ENCODE measurements at regions of chr15 and their contacts with region 1.

Region 1: DNA sequence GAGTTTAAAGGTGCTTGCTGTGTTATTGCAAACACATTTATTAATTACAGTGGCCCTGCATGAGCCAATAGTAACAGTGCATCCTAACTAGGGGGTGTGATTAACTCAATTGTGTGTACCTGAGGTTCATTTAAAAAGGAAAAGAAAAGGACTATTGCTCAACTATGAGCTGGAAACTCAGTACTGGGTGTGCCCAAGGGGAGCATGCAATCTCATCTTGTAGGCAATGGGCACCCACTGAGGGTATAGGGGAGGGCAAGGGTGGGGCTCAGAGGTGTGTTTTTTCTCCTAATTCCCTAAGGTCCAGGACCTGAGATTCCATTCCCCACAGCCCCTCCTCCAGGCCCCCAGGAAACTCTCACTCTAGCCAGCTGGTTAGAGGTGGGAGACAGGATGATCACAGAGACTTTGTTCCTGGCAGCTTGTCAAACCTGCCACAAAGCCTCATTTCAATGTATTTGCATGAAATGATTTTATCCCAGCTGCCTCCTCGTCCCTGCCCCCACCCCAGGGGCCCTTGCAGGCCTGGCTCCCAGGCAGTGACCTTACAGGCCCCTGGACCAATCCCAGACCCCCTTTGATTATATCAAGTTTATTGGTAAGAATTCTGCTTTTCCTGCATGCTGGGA is 220.7 kb downstream of the TBC1D2B start:
- DNase-seq: no peak
- ATAC-seq: no peak
- H3K4me3 ChIP-seq: no peak overlapping the region
- H3K27ac ChIP-seq: no peak overlapping the region
- H3K4me1 ChIP-seq: no peaks in the 10 kb centered on the region
- CTCF ChIP-seq: no peak
- EP300 ChIP-seq: no peak
- POLR2A ChIP-seq: no peak
- RAD21 ChIP-seq: no peak

Region 2: DNA sequence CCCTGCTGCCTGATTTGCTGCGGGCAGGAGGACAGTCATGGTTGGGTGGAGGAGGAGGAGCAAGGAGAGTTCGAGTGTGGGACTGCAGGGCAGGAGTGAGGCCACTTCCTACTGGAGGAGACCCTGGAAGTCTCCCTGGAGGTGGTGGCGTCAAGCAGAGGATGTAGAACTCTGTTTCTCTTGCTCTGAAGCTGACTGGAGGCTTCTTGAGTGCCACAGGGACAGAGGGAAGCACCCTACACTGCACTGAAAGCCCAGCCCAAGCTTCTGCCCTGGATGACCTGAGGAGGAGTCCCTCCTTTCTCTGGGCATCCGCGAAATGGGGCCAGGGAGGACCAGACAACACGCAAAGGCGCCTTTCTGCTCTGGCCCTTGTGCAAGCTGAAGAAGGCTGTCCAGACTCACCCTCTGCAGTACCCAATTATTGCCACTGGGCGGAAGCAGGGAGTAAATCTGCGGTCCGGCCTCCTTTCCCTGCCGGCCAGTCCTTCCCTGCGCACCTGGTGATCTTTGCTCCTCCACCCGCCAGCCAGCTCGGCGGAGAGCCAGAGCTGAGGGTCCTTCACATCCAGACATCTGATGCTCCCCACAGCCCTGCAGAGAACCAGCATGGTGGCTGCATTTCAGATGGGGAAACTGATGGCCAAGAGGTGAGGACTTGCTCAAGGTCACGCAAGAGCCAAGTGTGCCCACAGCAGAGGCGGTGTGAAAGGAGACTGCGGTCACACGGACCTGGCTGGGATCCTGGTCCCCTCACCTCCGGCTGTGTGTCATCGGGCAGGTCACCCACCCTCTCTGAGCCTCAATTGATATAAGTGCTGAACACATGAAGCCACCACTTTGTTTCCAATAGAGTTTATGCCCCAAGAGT is 13.6 kb after region 1 on chr15:
- CTCF ChIA-PET with region 1: interaction called, 12 read pairs
- POLR2A ChIA-PET with region 1: no interaction called
- DNase-seq: peak; percentile 73 to 78
- ATAC-seq: peak; percentile 72 to 88
- H3K4me3 ChIP-seq: no peak overlapping the region
- H3K27ac ChIP-seq: no peak overlapping the region
- H3K4me1 ChIP-seq: peaks cover 7% of the 10 kb centered on the region; the same call in 1 of the 3 replicates
- CTCF ChIP-seq: peak; percentile 53
- EP300 ChIP-seq: no peak
- POLR2A ChIP-seq: no peak
- RAD21 ChIP-seq: peak in 1 of 2 experiments; percentile 38; a peak in 3 of 5 replicates

Measured in A549 (cell line).